ENCODE measurements at regions of chr6 and their contacts with region 1.

Region 1: GRCh38 chr6:13336553-13336952 is 8.2 kb upstream of the TBC1D7 start:
- DNase-seq: peak; percentile 15 to 96 (median 88)

Region 2: GRCh38 chr6:12911387-12911960 is 425.1 kb before region 1 on chr6:
- intact Hi-C with region 1: loop called (anchors 2 kb)
- DNase-seq: peak in 1 of 42 donors; percentile 49

Region 3: DNA sequence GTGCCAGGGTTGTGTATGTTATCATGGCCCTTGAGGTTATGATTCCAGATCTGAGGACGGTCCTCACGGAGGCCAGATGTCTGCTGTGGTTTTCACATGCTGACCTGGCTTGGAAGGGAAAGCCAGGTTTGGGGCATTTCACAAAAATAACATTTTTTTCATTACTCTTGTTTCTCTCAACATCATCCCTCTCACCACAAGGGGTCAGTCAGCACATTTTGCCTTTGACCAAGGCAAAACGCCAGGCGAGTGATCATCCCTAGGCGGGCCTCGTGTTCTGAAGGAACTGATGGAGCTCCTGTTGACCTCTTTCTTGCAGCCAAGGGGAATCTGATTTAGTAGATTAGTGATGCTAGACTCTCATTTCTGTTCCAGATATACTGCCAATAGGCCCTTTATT is 141.7 kb before region 1 on chr6:
- intact Hi-C with region 1: loop called (anchors 5 kb)
- DNase-seq: peak in 41 of 42 donors; percentile 18 to 85 (median 54)

Region 4: GRCh38 chr6:13548500-13549210 is 212.1 kb after region 1 on chr6:
- intact Hi-C with region 1: loop called (anchors 10 kb)
- DNase-seq: peak in 1 of 42 donors; percentile 7

Measured in head of caudate nucleus (tissue), 42 donors.